ENCODE measurements at regions of chr12 and their contacts with region 1.

Region 1: DNA sequence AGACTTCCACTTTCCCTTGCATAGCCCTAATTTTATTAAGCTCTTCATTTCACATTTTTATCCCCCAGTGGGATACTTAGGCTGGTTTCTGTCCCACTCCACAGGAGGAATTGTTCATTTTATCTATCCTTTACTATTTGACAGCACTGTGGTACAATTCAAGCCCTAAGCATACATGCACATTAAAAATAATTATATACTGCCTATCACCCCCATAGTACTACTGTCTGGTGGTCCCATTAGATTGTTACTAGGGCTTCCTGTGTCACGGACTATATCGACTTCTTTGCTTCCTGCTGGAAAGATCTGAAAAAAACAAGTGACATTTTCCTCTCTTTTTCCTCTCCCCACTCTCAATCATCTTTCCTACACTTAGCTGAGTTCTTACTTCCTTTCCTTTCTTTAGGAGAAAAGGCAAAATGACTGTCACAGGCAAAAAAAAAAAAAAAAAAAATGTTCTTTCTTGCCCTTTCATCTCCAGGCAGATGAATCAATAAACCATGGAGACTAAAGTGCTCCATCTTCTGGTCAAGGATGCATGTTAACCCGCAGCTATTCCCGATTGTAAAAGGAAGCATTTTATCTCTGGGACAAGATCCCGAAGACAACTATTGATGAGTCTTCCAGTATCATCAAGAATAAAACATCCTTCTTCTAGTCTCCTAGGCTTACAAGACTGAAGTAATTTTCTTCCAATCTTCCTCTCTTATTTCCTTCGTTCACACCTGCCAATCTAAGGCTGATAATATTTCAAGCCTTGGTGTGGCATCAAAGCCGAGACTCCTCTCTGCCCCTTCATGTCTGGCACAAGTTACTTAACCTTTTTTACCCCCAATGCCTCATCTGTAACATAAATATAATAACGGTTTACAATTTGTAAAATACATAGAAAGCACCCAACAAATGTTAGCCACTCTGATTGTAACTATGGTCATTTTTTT is 94.4 kb upstream of the PLEKHG7 start:
- DNase-seq: no peak
- H3K4me3 Mint-ChIP-seq: no peak overlapping the region
- H3K27ac Mint-ChIP-seq: peak overlapping the region; percentile 28
- H3K4me1 Mint-ChIP-seq: peaks cover 27% of the 10 kb centered on the region
- H3K27me3 Mint-ChIP-seq: no peaks in the 10 kb centered on the region

Region 2: GRCh38 chr12:92593734-92594402 is 14.6 kb before region 1 on chr12:
- CTCF ChIA-PET with region 1: interaction called, 3 read pairs
- POLR2A ChIA-PET with region 1: interaction called, 3 read pairs
- intact Hi-C with region 1: loop called (anchors 1 kb)
- DNase-seq: peak; percentile 87
- H3K4me3 Mint-ChIP-seq: peak overlapping the region; percentile 25
- H3K27ac Mint-ChIP-seq: peak overlapping the region; percentile 92
- H3K4me1 Mint-ChIP-seq: peaks cover 80% of the 10 kb centered on the region
- H3K27me3 Mint-ChIP-seq: no peaks in the 10 kb centered on the region

Region 3: DNA sequence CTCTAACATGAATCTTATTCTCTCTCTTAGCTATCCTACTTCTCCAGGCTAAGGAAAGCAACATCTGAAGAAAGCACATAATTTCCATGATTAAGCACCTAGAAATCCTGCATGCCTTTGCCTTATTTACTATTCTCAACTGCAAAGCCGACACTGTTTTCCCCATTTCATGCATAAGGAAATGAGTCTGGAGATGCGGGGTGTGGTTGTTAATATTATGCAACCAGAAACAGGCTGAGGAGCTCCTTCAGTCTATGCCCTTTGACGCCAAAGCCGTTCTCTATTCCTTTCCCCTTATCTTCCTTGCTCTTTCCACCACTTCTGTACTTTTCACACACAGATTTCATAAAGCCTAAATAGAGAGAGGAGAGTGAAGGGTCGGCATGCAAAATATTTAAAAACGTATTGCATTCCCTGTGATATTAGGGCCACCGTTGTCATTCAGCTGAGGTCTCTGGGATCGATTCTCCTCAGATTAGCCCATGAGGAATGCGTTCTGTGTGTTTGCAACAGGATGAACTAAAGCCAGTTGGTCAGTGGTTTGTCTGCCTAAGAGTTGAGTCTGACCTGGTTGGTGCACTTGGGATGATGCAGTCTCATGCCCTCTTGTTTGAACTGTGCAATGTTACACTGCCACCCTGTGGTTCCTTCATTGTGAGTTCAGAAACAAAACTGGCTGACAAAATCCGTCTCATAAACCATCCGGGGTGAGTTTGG is 41.2 kb after region 1 on chr12:
- CTCF ChIA-PET with region 1: interaction called, 3 read pairs
- POLR2A ChIA-PET with region 1: no interaction called
- intact Hi-C with region 1: loop called (anchors 2 kb)
- DNase-seq: peak; percentile 65
- H3K4me3 Mint-ChIP-seq: no peak overlapping the region
- H3K27ac Mint-ChIP-seq: no peak overlapping the region
- H3K4me1 Mint-ChIP-seq: peaks cover 12% of the 10 kb centered on the region
- H3K27me3 Mint-ChIP-seq: no peaks in the 10 kb centered on the region

Measured in activated CD4-positive, alpha-beta memory T cell treated with anti-CD3 and anti-CD28 coated beads for 36 hours (primary cell).